ENCODE measurements at regions of chr15 and their contacts with region 1.

Region 1: DNA sequence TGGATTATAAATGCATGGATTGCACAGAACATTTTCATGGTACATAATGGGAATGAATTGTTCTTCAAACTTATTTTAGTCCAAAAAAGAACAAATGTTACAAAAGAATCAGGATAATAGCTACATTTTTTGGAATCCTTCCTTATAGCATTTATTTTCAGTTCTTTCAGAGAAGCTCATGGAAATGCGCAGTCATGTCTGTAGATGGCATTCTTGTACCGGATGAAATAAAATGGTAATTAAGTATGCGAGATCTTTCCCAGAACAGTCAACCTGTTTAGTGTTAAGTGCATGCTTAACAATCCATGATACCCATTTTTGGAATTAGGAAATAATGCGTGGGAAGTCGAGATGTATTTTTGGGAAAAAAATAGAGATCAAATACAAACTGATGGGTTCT is 38.2 kb upstream of the GOLGA8B start:
- DNase-seq: peak; percentile 58
- ATAC-seq: peak; percentile 81
- H3K4me3 ChIP-seq: no peak overlapping the region
- H3K27ac ChIP-seq: no peak overlapping the region
- H3K4me1 ChIP-seq: no peaks in the 10 kb centered on the region
- H3K27me3 ChIP-seq: peaks cover 3% of the 10 kb centered on the region
- CTCF ChIP-seq: peak; percentile 64
- POLR2A ChIP-seq: no peak
- RAD21 ChIP-seq: peak; percentile 75

Region 2: GRCh38 chr15:34682673-34683072 is 61.0 kb after region 1 on chr15:
- CTCF ChIA-PET with region 1: no interaction called
- POLR2A ChIA-PET with region 1: no interaction called
- dilution Hi-C with region 1: no loop called
- in situ Hi-C with region 1: no loop called
- intact Hi-C with region 1: no loop called
- DNase-seq: peak; percentile 76
- ATAC-seq: no peak
- H3K4me3 ChIP-seq: no peak overlapping the region
- H3K27ac ChIP-seq: no peak overlapping the region
- H3K4me1 ChIP-seq: peaks cover 2% of the 10 kb centered on the region; the same call in 1 of the 2 replicates
- H3K27me3 ChIP-seq: peaks cover 14% of the 10 kb centered on the region
- CTCF ChIP-seq: no peak
- POLR2A ChIP-seq: no peak
- RAD21 ChIP-seq: no peak

Region 3: GRCh38 chr15:34914317-34914716 is 292.6 kb after region 1 on chr15:
- CTCF ChIA-PET with region 1: no interaction called
- POLR2A ChIA-PET with region 1: no interaction called
- dilution Hi-C with region 1: no loop called
- in situ Hi-C with region 1: loop called (anchors 5 kb)
- intact Hi-C with region 1: no loop called
- DNase-seq: no peak
- ATAC-seq: no peak; the same call in 1 of the 2 replicates
- H3K4me3 ChIP-seq: no peak overlapping the region
- H3K27ac ChIP-seq: no peak overlapping the region
- H3K4me1 ChIP-seq: 0 out of 2 replicates have a peak, but pooled peaks cover 2% of the 10 kb centered on the region
- H3K27me3 ChIP-seq: no peaks in the 10 kb centered on the region
- CTCF ChIP-seq: no peak
- POLR2A ChIP-seq: no peak
- RAD21 ChIP-seq: no peak